OCI-LY7 (cell line): ENCODE measurements at regions of chr7 and their contacts with region 1.

Region 1: GRCh38 chr7:30268586-30268985 is 15.8 kb upstream of the ZNRF2 start:
- DNase-seq: no peak
- H3K4me3 ChIP-seq: no peak overlapping the region
- H3K27ac ChIP-seq: no peak overlapping the region
- H3K4me1 ChIP-seq: peaks cover 13% of the 10 kb centered on the region
- CTCF ChIP-seq: no peak

Region 2: GRCh38 chr7:30225863-30226613 is 42.5 kb before region 1 on chr7:
- CTCF ChIA-PET with region 1: no interaction called
- POLR2A ChIA-PET with region 1: no interaction called
- intact Hi-C with region 1: loop called (anchors 5 kb)
- DNase-seq: peak; percentile 67
- H3K4me3 ChIP-seq: no peak overlapping the region
- H3K27ac ChIP-seq: peak overlapping the region; percentile 21
- H3K4me1 ChIP-seq: peaks cover 21% of the 10 kb centered on the region
- CTCF ChIP-seq: no peak